ENCODE measurements at regions of chr12 and their contacts with region 1.

Region 1: DNA sequence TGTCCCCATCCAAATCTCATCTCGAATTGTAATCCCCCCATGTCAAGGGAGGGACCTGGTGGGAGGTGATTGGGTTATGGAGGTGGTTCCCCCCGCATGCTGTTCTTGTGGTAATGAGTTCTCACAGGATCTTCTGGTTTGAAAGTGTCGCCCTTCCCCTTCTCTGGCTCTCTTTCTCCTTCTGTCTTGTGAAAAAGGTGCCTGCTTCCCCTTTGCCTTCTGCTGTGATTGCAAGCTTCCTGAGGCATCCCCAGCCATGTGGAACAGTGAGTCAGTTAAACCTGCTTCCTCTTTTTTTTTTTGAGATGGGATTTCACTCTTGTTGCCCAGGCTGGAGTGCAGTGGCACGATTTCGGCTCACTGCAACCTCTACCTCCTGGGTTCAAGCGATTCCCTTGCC is 104.0 kb downstream of the CCDC91 start:
- DNase-seq: no peak
- H3K4me3 ChIP-seq: no peak overlapping the region
- H3K27ac ChIP-seq: no peak overlapping the region
- H3K4me1 ChIP-seq: no peaks in the 10 kb centered on the region
- H3K27me3 ChIP-seq: no peaks in the 10 kb centered on the region
- CTCF ChIP-seq: no peak
- EP300 ChIP-seq: no peak
- POLR2A ChIP-seq: no peak

Region 2: GRCh38 chr12:28190321-28191050 is 103.8 kb before region 1 on chr12 and contains the start of gene CCDC91:
- intact Hi-C with region 1: no loop called
- DNase-seq: peak; percentile 84 to 91 (median 89)
- H3K4me3 ChIP-seq: peak within 1 kb of the TSS; percentile 99
- H3K27ac ChIP-seq: peak within 1 kb of the TSS; percentile 83 to 95
- H3K4me1 ChIP-seq: peaks cover 1% of the 10 kb centered on the region
- H3K27me3 ChIP-seq: no peaks in the 10 kb centered on the region
- CTCF ChIP-seq: peak in 1 of 3 donors; percentile 31
- EP300 ChIP-seq: no peak
- POLR2A ChIP-seq: peak; percentile 60
- total RNA-seq, gene CCDC91: 29.2 to 45.7 (median 38.2) TPM

Region 3: GRCh38 chr12:28699029-28699428 is 404.7 kb after region 1 on chr12:
- intact Hi-C with region 1: loop called in 1 of 4 experiments (anchors 10 kb)
- DNase-seq: no peak
- H3K4me3 ChIP-seq: no peak overlapping the region
- H3K27ac ChIP-seq: no peak overlapping the region
- H3K4me1 ChIP-seq: no peaks in the 10 kb centered on the region
- H3K27me3 ChIP-seq: no peaks in the 10 kb centered on the region
- CTCF ChIP-seq: no peak
- EP300 ChIP-seq: no peak
- POLR2A ChIP-seq: no peak